PC-9 (cell line): ENCODE measurements at regions of chr10 and their contacts with region 1.

Region 1: GRCh38 chr10:72354478-72355213 is at the start of gene DNAJB12:
- DNase-seq: peak; percentile 90 to 92
- H3K4me3 ChIP-seq: peak within 1 kb of the TSS; percentile 85
- H3K27ac ChIP-seq: peak within 1 kb of the TSS; percentile 90
- H3K4me1 ChIP-seq: peaks cover 16% of the 10 kb centered on the region
- H3K27me3 ChIP-seq: no peaks in the 10 kb centered on the region
- CTCF ChIP-seq: no peak
- total RNA-seq, gene DNAJB12: 37.0 and 46.9 TPM in 2 replicates

Region 2: GRCh38 chr10:72097448-72098300 is 257.0 kb before region 1 on chr10:
- CTCF ChIA-PET with region 1: no interaction called
- POLR2A ChIA-PET with region 1: interaction called, 12 read pairs
- intact Hi-C with region 1: no loop called
- DNase-seq: peak; percentile 84 to 100
- H3K4me3 ChIP-seq: no peak overlapping the region
- H3K27ac ChIP-seq: peak overlapping the region; percentile 68
- H3K4me1 ChIP-seq: peaks cover 49% of the 10 kb centered on the region
- H3K27me3 ChIP-seq: no peaks in the 10 kb centered on the region
- CTCF ChIP-seq: no peak

Region 3: GRCh38 chr10:72846225-72846624 is 491.6 kb after region 1 on chr10:
- CTCF ChIA-PET with region 1: interaction called, 4 read pairs
- POLR2A ChIA-PET with region 1: no interaction called
- intact Hi-C with region 1: loop called (anchors 2 kb)
- DNase-seq: peak; percentile 50 to 94
- H3K4me3 ChIP-seq: peak overlapping the region; percentile 18; the same call in 1 of the 2 replicates
- H3K27ac ChIP-seq: peak overlapping the region; percentile 87
- H3K4me1 ChIP-seq: peaks cover 29% of the 10 kb centered on the region
- H3K27me3 ChIP-seq: no peaks in the 10 kb centered on the region
- CTCF ChIP-seq: no peak